Activated B cell treated with CpG ODN at 0.5 μM for 24 hours (primary cell): ENCODE measurements at regions of chr21 and their contacts with region 1.

Region 1: DNA sequence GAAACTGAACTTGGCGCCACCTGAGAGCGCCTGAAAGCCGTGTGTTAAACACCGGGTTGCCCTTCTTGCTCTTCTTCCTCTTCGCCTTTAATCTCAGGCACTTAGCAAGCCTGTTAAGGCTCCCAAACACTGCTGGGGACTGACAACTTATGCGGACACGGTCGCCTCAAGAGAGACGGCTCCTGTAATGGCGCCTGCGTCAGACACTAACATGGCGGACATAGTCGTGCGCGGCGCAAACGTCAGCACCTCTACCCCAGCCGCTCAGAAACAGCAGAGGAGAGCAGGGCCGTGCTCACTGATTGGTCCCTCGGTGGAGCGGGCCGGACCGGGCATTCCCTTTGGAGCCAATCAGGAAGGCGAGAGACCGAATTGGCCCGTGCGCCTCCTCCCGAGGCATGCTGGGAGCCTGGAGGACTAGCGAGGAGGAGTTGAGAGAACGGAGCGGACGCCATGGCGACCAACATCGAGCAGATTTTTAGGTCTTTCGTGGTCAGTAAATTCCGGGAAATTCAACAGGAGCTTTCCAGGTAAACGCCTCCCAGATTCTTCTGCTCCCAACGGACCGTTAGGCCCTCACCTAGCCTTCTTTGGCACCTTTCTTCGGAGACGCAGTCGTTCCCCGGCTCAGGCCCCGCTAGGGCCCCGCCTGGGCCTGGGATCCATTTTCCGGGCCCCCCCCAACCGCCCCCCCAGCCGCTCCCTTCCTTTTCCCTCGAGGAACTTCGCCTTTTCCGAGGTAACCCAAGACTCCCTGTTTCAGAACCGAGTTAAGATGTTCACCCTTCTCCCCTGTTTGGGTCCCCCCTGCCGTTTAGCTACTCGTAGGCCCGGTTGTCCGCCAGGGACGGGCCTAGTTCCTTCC is at the start of gene SON:
- DNase-seq: peak; percentile 86
- ATAC-seq: peak; percentile 88
- H3K4me3 Mint-ChIP-seq: peak within 1 kb of the TSS; percentile 98
- H3K27ac Mint-ChIP-seq: peak within 1 kb of the TSS; percentile 100
- H3K4me1 Mint-ChIP-seq: peaks cover 48% of the 10 kb centered on the region
- H3K27me3 Mint-ChIP-seq: no peaks in the 10 kb centered on the region
- CTCF ChIP-seq: no peak
- total RNA-seq, gene SON: 429 and 474 TPM in 2 replicates

Region 2: DNA sequence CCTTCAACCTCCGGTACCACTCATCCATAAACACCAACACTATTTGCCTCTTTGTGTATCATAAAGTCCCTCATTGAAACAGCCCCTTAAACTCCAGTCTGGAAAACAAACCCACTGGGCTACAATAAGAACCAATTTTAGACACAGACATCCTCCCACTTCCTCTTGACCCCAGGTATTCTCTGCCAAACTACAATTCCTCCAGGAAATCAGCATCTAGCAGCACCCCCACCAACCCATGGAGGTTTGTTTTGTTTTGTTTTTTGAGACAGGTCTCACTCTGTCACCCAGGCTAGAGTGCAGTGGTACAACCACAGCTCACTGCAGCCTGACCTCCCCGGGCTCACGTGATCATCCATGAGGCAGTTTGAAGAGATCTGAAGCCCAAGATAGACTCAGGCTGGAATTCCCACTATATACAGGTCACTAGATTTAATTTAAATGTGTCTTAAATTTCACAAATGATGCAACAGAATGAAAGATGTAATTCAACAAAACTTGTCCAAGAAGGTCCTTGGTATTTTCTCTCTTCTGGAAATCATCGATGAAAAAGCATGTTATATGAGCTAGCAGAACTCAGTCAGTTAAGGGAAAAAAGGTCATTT is 987.9 kb before region 1 on chr21:
- CTCF ChIA-PET with region 1: no interaction called
- POLR2A ChIA-PET with region 1: no interaction called
- intact Hi-C with region 1: no loop called
- DNase-seq: no peak
- ATAC-seq: no peak
- H3K4me3 Mint-ChIP-seq: no peak overlapping the region
- H3K27ac Mint-ChIP-seq: no peak overlapping the region
- H3K4me1 Mint-ChIP-seq: no peaks in the 10 kb centered on the region
- H3K27me3 Mint-ChIP-seq: peaks cover 13% of the 10 kb centered on the region
- CTCF ChIP-seq: no peak

Region 3: GRCh38 chr21:32612075-32612998 is 930.5 kb before region 1 on chr21 and contains the start of gene CFAP298:
- CTCF ChIA-PET with region 1: no interaction called
- POLR2A ChIA-PET with region 1: no interaction called
- intact Hi-C with region 1: loop called (anchors 1 kb)
- DNase-seq: peak; percentile 83
- ATAC-seq: peak; percentile 89
- H3K4me3 Mint-ChIP-seq: peak within 1 kb of the TSS; percentile 97
- H3K27ac Mint-ChIP-seq: peak within 1 kb of the TSS; percentile 96
- H3K4me1 Mint-ChIP-seq: peaks cover 12% of the 10 kb centered on the region
- H3K27me3 Mint-ChIP-seq: no peaks in the 10 kb centered on the region
- CTCF ChIP-seq: no peak
- total RNA-seq, gene CFAP298: 36.4 and 37.3 TPM in 2 replicates

Region 4: GRCh38 chr21:32770871-32771523 is 771.9 kb before region 1 on chr21:
- CTCF ChIA-PET with region 1: no interaction called
- POLR2A ChIA-PET with region 1: interaction called, 10 read pairs
- intact Hi-C with region 1: loop called (anchors 1 kb)
- DNase-seq: no peak
- ATAC-seq: peak; percentile 37
- H3K4me3 Mint-ChIP-seq: peak overlapping the region; percentile 96
- H3K27ac Mint-ChIP-seq: peak overlapping the region; percentile 88
- H3K4me1 Mint-ChIP-seq: peaks cover 45% of the 10 kb centered on the region
- H3K27me3 Mint-ChIP-seq: peaks cover 2% of the 10 kb centered on the region
- CTCF ChIP-seq: no peak

Region 5: GRCh38 chr21:33324291-33325221 is 218.3 kb before region 1 on chr21 and contains the start of gene IFNAR1:
- CTCF ChIA-PET with region 1: no interaction called
- POLR2A ChIA-PET with region 1: interaction called, 4 read pairs
- intact Hi-C with region 1: loop called (anchors 2 kb)
- DNase-seq: peak; percentile 97
- ATAC-seq: peak; percentile 80
- H3K4me3 Mint-ChIP-seq: no peak within 1 kb of the TSS
- H3K27ac Mint-ChIP-seq: no peak within 1 kb of the TSS
- H3K4me1 Mint-ChIP-seq: peaks cover 32% of the 10 kb centered on the region
- H3K27me3 Mint-ChIP-seq: no peaks in the 10 kb centered on the region
- CTCF ChIP-seq: no peak
- total RNA-seq, gene IFNAR1: 33.9 and 34.5 TPM in 2 replicates

Region 6: DNA sequence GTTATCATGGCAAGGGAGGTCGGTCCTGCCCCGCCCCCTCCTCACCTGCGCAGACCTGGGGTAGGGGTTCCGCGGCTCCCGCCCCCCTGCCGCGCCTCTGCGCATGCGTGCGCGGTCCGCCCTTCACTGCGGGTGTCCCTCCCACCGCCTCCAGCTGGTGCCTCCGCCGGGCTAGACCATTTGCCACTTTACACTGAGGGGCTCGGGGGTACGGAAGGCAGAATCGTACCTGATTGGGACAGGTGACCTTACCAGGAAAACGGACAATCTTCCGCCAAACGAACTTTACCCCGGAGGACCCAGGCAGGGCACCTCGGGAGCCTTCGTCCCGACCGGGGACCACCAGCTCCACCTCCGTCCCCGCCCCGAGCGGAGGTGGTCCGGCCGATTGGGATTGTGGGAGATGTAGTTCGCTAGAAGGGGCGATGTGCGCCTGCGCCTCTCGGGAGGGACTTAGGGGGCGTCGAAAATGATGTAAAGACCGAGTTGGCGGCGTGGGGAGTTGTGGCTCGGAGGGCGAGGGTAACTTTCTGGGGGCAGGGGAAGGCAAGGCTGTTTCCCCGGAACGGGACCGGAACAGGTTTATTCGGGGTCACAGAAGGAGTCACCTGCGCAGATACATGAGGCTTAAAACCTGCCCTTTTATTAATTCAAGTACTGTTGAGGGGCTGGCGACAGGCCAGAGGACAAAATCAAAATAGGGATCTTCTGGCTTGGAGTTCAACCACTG is 51.3 kb before region 1 on chr21 and contains the start of gene DNAJC28:
- CTCF ChIA-PET with region 1: no interaction called
- POLR2A ChIA-PET with region 1: interaction called, 22 read pairs
- intact Hi-C with region 1: loop called (anchors 1 kb)
- DNase-seq: peak; percentile 97
- ATAC-seq: peak; percentile 98
- H3K4me3 Mint-ChIP-seq: peak within 1 kb of the TSS; percentile 92
- H3K27ac Mint-ChIP-seq: peak within 1 kb of the TSS; percentile 72
- H3K4me1 Mint-ChIP-seq: peaks cover 10% of the 10 kb centered on the region
- H3K27me3 Mint-ChIP-seq: no peaks in the 10 kb centered on the region
- CTCF ChIP-seq: no peak
- total RNA-seq, gene DNAJC28: 0.53 and 0.66 TPM in 2 replicates

Region 7: DNA sequence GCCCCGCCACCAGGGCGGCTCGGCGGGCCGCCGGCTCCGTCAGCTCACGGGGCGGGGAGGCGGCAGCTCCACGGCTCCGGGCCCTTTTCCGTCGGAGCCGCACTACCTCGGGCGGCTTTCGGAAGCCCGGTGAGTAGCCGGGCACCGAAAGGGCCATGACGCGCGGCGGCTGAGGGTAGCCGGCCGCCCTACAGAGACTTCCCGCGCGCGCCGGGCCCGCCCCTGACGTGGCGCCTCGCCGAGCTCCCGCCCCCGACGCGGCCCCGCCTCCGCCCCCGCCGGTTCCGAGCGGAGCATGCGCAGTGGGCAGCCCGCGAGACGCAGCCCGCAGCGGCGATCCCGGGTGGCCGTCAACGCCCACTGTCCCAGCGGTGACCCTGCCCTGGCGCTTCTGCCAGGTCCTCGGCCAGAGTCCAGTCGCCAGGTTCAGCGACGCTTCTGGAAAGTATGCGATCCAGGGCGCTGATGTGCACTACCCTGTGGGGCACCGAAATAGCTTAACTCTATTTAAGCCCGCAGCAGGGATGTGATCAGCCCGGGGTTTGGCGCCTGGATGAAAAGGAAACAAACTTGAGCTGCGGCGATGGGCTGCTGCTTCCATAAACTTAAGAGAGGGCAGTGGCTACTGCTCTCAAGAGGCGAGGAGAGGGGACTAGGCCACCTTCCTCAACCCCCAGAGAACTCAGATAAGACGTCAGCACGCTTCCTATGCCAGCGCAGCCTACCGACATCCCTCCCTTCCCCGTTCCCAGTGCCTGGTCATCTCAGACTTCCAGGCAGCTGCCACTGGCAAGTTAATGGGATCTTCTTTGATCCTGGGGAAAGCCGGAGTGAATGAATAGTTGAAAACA is 45.8 kb after region 1 on chr21 and contains the start of gene DONSON:
- CTCF ChIA-PET with region 1: no interaction called
- POLR2A ChIA-PET with region 1: interaction called, 22 read pairs
- intact Hi-C with region 1: loop called (anchors 1 kb)
- DNase-seq: peak; percentile 94
- ATAC-seq: peak; percentile 95
- H3K4me3 Mint-ChIP-seq: peak within 1 kb of the TSS; percentile 90
- H3K27ac Mint-ChIP-seq: peak within 1 kb of the TSS; percentile 56
- H3K4me1 Mint-ChIP-seq: peaks cover 10% of the 10 kb centered on the region
- H3K27me3 Mint-ChIP-seq: no peaks in the 10 kb centered on the region
- CTCF ChIP-seq: no peak
- total RNA-seq, gene DONSON: 4.4 and 4.7 TPM in 2 replicates